Colonic mucosa (tissue), 4 donors: ENCODE measurements at regions of chr4 and their contacts with region 1.

Region 1: DNA sequence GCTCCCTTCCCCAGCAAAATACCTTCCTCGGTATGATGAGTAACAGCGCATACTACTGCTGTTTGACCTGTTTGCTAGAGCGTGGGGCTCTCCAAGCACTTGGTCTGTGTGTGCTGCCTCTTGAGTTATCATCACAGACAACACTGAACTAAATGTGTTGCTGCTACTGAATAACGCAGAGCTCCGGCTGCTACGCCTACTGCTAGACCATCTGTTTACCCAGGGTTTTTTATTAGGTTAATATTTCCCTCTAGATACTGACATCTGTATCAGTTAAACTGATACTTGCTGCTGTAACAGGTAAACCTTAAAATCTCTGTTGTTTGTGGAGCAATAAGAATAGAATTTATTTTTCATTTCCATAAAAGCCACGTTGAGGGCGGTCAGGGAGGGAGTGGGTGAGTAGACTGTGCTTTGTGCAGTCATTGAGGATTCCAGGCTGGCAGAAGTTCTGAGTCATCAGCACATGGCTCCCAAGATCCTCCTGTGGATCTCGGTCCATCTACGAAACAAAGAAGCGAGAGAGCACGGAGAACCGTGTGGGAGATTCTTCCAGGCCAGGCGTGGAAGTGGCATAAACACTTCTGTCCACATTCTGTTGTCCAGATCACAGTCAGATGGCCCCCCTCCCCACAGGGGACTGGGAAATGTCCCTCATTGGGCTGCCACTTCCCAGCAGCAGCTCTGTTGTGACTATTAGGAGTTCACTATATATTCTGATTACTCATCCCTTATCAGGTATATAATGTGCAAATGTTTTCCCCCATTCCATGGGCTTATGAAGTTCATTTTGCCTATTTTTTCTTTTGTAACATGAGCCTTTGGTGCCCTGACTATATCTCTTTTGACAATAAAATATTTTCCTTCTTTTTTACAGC is 14.1 kb downstream of the GRK4 start:
- DNase-seq: no peak
- H3K4me3 ChIP-seq: no peak overlapping the region
- H3K27ac ChIP-seq: no peak overlapping the region
- H3K4me1 ChIP-seq: no peaks in the 10 kb centered on the region
- H3K27me3 ChIP-seq: no peaks in the 10 kb centered on the region
- CTCF ChIP-seq: no peak

Region 2: GRCh38 chr4:3037957-3038461 is 60.6 kb after region 1 on chr4:
- intact Hi-C with region 1: loop called (anchors 5 kb)
- DNase-seq: no peak
- H3K4me3 ChIP-seq: no peak overlapping the region
- H3K27ac ChIP-seq: no peak overlapping the region
- H3K4me1 ChIP-seq: no peaks in the 10 kb centered on the region
- H3K27me3 ChIP-seq: no peaks in the 10 kb centered on the region
- CTCF ChIP-seq: no peak